ENCODE measurements at regions of chr1 and their contacts with region 1.

Region 1: GRCh38 chr1:234955107-234955731 is 173.4 kb downstream of the TOMM20 start:
- DNase-seq: no peak
- ATAC-seq: no peak
- H3K4me3 ChIP-seq: no peak overlapping the region
- H3K27ac ChIP-seq: peak overlapping the region; percentile 100
- H3K4me1 ChIP-seq: peaks cover 62% of the 10 kb centered on the region
- H3K27me3 ChIP-seq: no peaks in the 10 kb centered on the region
- CTCF ChIP-seq: no peak

Region 2: DNA sequence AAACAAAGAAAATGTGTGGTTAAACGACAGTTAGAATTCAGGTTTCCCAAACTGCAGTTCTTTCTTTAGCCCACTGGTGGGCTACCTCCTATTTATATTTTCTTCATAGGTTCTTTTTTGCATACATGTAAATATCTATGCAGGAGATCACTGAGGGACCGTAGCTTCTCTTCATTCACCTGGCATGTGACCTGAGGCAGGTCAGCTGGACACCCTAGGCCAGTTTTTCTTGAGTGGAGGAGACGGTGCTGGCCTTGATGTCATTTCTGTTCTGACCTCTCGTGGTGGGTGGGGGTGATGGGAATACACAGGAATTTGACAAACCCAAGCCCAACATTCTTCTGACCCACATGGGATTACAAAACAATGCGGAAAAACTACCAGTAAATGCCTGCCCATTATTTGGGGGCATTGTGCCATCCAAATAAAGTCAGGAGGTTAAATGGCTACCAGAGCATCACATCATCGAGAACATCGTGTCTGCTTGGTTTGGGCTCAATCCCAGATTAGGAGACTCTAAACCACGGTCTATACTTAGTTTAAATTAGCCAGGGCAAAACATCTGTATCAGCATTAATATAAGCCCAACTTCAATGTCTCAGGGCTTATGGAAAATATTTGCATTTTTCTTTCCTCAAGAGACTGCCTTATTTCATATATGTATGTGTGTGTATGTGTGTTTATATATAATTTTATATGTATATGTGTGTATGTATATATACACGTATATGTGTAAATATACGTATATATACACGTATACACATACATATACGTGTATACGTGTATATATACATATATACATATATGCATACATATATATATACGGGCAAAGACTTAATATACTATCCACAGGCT is 337.9 kb before region 1 on chr1:
- CTCF ChIA-PET with region 1: no interaction called
- POLR2A ChIA-PET with region 1: interaction called, 4 read pairs
- in situ Hi-C with region 1: loop called (anchors 25 kb)
- intact Hi-C with region 1: loop called (anchors 2 kb)
- DNase-seq: no peak
- ATAC-seq: no peak
- H3K4me3 ChIP-seq: no peak overlapping the region
- H3K27ac ChIP-seq: peak overlapping the region; percentile 100
- H3K4me1 ChIP-seq: peaks cover 91% of the 10 kb centered on the region
- H3K27me3 ChIP-seq: no peaks in the 10 kb centered on the region
- CTCF ChIP-seq: peak; percentile 52

Region 3: GRCh38 chr1:234722904-234723720 is 232.1 kb before region 1 on chr1:
- CTCF ChIA-PET with region 1: interaction called, 6 read pairs
- POLR2A ChIA-PET with region 1: no interaction called
- in situ Hi-C with region 1: no loop called
- intact Hi-C with region 1: loop called (anchors 5 kb)
- DNase-seq: peak; percentile 88
- ATAC-seq: peak; percentile 5; the same call in 1 of the 2 replicates
- H3K4me3 ChIP-seq: peak overlapping the region in 1 of 2 experiments; percentile 4; a peak in 1 of 4 replicates
- H3K27ac ChIP-seq: peak overlapping the region; percentile 95
- H3K4me1 ChIP-seq: peaks cover 82% of the 10 kb centered on the region
- H3K27me3 ChIP-seq: no peaks in the 10 kb centered on the region
- CTCF ChIP-seq: no peak

Region 4: DNA sequence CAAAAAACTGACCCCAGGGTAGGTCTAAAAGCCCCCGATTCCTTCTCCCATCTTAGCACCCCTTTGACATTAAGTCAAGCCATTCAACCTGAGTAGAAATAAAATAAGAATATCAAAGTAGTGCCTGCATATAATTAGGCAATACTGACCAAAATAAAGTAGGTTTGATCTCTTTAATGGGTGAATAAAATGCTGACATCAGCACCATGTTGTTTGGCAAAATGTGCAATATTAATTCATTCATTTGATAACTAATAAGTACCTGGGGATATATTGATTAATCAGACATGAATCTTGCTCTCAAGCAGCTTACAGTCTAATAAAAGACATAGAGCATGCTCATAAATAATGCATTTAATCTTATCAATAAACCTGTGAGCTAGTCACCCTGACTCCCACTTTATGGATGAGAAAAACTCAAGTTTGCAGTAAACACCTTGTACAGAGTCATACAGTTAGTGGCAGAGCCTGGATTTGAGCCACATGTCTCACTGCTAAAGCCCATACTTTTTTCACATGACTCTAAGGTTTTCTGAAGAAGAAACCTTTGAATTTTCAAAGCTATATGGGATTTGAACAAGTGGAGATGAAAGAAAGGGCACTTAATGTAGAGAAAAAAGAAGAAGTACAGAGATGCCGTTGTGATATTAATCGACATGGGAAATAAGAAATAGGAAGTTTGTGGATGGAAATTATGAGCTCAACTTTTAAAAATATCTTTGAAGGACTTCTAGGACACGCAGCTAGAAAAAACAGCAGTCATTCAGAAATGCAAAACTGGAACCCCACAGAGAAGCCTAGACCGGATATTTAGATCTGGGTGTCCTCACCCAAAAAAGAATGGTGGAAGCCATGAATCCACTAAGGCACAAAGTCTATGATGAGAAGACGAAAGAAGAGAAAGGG is 10.5 kb before region 1 on chr1:
- CTCF ChIA-PET with region 1: no interaction called
- POLR2A ChIA-PET with region 1: no interaction called
- in situ Hi-C with region 1: no loop called
- intact Hi-C with region 1: no loop called
- DNase-seq: no peak
- ATAC-seq: no peak
- H3K4me3 ChIP-seq: no peak overlapping the region
- H3K27ac ChIP-seq: peak overlapping the region; percentile 79
- H3K4me1 ChIP-seq: no peaks in the 10 kb centered on the region
- H3K27me3 ChIP-seq: no peaks in the 10 kb centered on the region
- CTCF ChIP-seq: no peak

Measured in Panc1 (cell line).